Endothelial cell of umbilical vein (primary cell): ENCODE measurements at regions of chr3 and their contacts with region 1.

Region 1: GRCh38 chr3:14548321-14548729 is 8.2 kb upstream of the GRIP2 start:
- DNase-seq: peak; percentile 50
- H3K4me3 ChIP-seq: no peak overlapping the region
- H3K27ac ChIP-seq: no peak overlapping the region
- H3K4me1 ChIP-seq: no peaks in the 10 kb centered on the region
- H3K27me3 ChIP-seq: peaks cover 0 to 3% of the 10 kb centered on the region in 2 experiments
- CTCF ChIP-seq: peak; percentile 69 to 87
- POLR2A ChIP-seq: no peak

Region 2: DNA sequence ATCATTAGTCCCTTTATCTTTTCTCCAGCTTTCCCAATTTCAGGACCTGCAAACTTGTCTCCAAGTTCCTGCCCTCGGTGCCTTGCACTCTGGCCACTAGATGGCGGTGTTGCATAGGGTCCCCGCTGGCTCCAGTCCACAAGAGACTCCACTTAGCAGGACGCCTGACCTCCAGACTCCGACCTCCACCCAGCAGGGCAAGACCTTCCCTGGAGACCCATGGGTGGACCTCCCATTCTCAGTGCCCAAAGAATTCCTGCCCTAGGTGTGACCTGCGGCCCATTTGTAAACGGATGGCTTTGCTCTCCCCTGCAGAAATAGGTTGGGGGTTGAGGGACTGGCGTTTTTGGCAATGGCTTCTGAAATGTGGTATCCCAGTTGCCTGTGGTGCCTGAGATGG is 287.1 kb before region 1 on chr3:
- CTCF ChIA-PET with region 1: interaction called, 35 read pairs
- POLR2A ChIA-PET with region 1: no interaction called
- dilution Hi-C with region 1: no loop called
- intact Hi-C with region 1: loop called (anchors 1 kb)
- DNase-seq: peak; percentile 81
- H3K4me3 ChIP-seq: no peak overlapping the region
- H3K27ac ChIP-seq: no peak overlapping the region
- H3K4me1 ChIP-seq: no peaks in the 10 kb centered on the region
- H3K27me3 ChIP-seq: peaks cover 6 to 9% of the 10 kb centered on the region in 2 experiments
- CTCF ChIP-seq: peak; percentile 90 to 91
- POLR2A ChIP-seq: no peak

Region 3: DNA sequence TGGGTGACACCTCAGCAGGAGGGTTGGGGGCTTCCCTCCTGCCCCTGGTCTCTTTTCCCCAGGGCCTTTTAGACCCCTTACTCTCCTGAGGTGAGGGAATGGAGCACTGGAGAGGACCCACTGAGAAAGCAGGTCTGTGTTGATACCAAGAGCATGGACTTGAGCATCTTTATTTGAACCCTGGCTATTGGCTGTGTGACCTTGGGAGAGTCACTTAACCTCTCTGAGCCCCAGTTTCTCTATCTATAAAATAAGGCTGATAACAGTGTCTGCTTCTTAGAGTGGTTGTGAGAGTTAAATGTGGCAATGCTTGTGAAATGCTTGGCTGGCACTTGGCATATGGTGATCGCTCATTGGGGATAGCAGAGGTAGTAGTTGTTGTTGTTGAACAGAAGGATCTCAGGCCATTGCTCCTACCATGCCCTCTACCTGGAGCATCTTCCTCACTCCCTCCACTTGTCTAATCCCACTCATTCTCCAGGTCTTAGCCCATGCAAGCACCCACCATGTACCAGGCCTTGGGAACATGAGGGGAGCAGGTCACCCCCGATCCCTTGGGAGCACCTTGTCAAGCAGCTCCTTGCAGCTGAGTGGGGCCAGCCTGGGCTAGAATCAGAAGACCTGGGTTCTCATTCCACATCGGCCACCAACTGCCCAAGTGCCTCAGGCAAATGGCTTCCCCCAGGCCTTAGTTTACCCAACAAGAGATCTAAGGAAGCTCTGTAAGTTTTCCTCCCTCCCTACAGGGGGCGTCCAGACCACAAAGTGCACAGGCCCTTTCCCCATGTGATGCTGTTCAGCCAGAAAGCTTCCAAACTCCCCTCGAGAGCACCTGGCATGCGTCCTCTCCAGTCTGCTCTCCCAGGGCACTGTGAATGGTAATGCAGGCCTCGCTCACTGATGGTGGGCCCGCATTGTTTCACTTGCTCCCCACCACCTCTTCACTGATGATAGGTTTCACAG is 273.0 kb before region 1 on chr3:
- CTCF ChIA-PET with region 1: interaction called, 7 read pairs
- POLR2A ChIA-PET with region 1: no interaction called
- dilution Hi-C with region 1: no loop called
- intact Hi-C with region 1: loop called (anchors 5 kb)
- DNase-seq: peak; percentile 11
- H3K4me3 ChIP-seq: no peak overlapping the region
- H3K27ac ChIP-seq: no peak overlapping the region
- H3K4me1 ChIP-seq: no peaks in the 10 kb centered on the region
- H3K27me3 ChIP-seq: no peaks in the 10 kb centered on the region
- CTCF ChIP-seq: peak; percentile 31 to 55
- POLR2A ChIP-seq: no peak

Region 4: GRCh38 chr3:14461748-14462324 is 86.5 kb before region 1 on chr3:
- CTCF ChIA-PET with region 1: no interaction called
- POLR2A ChIA-PET with region 1: no interaction called
- dilution Hi-C with region 1: no loop called
- intact Hi-C with region 1: loop called (anchors 1 kb)
- DNase-seq: peak; percentile 73
- H3K4me3 ChIP-seq: no peak overlapping the region
- H3K27ac ChIP-seq: no peak overlapping the region
- H3K4me1 ChIP-seq: peaks cover 38% of the 10 kb centered on the region
- H3K27me3 ChIP-seq: no peaks in the 10 kb centered on the region
- CTCF ChIP-seq: peak; percentile 77 to 93
- POLR2A ChIP-seq: no peak

Region 5: GRCh38 chr3:14467814-14468620 is 80.3 kb before region 1 on chr3:
- CTCF ChIA-PET with region 1: no interaction called
- POLR2A ChIA-PET with region 1: no interaction called
- dilution Hi-C with region 1: no loop called
- intact Hi-C with region 1: loop called (anchors 1 kb)
- DNase-seq: peak; percentile 41
- H3K4me3 ChIP-seq: no peak overlapping the region
- H3K27ac ChIP-seq: no peak overlapping the region
- H3K4me1 ChIP-seq: peaks cover 7% of the 10 kb centered on the region
- H3K27me3 ChIP-seq: no peaks in the 10 kb centered on the region
- CTCF ChIP-seq: peak; percentile 64 to 85
- POLR2A ChIP-seq: no peak

Region 6: DNA sequence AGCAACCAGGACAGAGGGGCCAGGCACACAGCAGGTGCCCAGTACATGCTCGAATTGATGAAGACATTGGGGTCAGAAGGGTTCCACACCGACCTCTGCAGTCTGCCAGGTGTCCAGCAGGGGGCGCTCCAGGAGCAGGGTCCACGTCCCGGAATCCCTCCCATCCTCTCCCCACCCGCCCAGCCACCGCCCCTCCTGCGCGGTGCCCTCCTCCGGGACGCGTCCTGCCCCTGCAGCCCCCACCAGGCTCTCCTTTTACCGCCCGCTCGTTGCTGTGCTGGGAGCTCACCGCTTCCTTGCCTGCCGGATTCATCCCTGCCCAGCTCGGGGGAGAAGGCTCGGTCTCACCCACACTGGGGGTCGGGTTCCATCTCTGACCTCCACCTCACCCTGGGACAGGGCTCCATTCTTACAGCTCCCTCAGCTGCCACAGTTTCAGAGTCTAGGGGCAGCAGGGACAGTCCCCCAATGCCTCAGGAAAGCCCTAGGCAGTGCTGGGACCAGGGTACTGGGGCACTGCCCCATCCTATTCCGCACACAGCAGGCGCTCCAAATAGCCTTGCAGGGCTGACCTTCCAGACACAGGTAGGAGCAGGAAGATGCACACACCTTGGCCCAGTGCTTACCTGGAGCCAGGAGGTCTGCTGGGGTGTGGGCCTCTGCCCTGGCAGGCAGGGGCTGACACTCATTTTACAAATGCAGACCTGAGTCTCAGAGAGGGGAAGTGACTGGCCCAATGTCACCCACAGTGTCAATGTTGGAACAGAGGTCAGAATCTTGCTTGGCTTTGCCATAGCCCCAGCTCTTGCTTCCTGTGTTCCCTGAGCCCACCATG is 39.1 kb before region 1 on chr3:
- CTCF ChIA-PET with region 1: interaction called, 24 read pairs
- POLR2A ChIA-PET with region 1: no interaction called
- dilution Hi-C with region 1: no loop called
- intact Hi-C with region 1: loop called (anchors 1 kb)
- DNase-seq: peak; percentile 30
- H3K4me3 ChIP-seq: no peak overlapping the region
- H3K27ac ChIP-seq: no peak overlapping the region
- H3K4me1 ChIP-seq: no peaks in the 10 kb centered on the region
- H3K27me3 ChIP-seq: no peaks in the 10 kb centered on the region
- CTCF ChIP-seq: peak; percentile 66 to 94
- POLR2A ChIP-seq: no peak

Region 7: GRCh38 chr3:14537590-14538447 is 10.5 kb before region 1 on chr3:
- CTCF ChIA-PET with region 1: interaction called, 10 read pairs
- POLR2A ChIA-PET with region 1: no interaction called
- dilution Hi-C with region 1: no loop called
- intact Hi-C with region 1: no loop called
- DNase-seq: no peak
- H3K4me3 ChIP-seq: no peak overlapping the region
- H3K27ac ChIP-seq: no peak overlapping the region
- H3K4me1 ChIP-seq: no peaks in the 10 kb centered on the region
- H3K27me3 ChIP-seq: no peaks in the 10 kb centered on the region
- CTCF ChIP-seq: no peak
- POLR2A ChIP-seq: no peak